ENCODE measurements at regions of chr1 and their contacts with region 1.

Region 1: DNA sequence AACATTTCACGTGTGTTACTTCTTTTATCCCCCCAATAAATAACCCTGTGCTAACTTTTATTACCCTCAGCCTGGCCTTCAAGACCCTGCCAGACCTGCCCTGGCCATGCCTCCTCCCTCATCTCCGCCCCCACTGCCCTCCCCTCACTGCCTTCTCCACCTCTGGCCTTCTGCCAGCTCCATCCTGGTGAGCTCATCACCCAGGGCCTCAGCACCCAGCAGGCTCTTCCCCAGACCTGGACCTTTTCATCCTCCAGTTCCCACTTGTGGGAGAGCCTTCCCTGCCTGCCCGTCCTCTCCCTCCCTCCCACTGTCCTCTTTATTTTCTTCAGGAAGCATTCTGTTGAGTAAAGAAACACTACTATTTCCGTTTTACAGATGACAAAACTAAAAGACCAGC is 72.0 kb downstream of the SLC66A1 start:
- DNase-seq: no peak
- H3K4me3 Mint-ChIP-seq: no peak overlapping the region
- H3K27ac Mint-ChIP-seq: peak overlapping the region; percentile 18
- H3K4me1 Mint-ChIP-seq: peaks cover 30% of the 10 kb centered on the region
- H3K27me3 Mint-ChIP-seq: no peaks in the 10 kb centered on the region

Region 2: DNA sequence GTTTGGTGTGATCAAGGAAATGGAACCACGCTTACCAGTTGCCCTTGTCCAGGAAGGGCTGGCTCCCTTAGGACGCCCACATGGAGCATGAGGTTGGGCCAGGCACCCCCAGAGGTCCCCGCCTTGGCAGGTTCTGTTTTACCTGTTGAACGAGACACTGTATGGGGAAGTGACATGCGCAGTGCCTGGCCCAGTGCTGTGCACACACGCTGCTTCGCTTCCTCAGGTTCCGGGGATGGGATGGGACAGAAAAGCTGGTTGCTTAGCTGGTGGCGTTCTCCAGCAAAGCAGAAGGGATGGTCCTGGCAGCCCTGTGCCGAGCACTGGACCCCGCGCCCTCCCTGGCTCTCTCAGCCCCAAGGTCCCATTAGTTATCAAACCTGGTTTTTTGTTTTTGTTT is 51.3 kb before region 1 on chr1:
- CTCF ChIA-PET with region 1: no interaction called
- POLR2A ChIA-PET with region 1: no interaction called
- intact Hi-C with region 1: no loop called
- DNase-seq: no peak
- H3K4me3 Mint-ChIP-seq: no peak overlapping the region
- H3K27ac Mint-ChIP-seq: no peak overlapping the region
- H3K4me1 Mint-ChIP-seq: peaks cover 29% of the 10 kb centered on the region
- H3K27me3 Mint-ChIP-seq: no peaks in the 10 kb centered on the region

Region 3: DNA sequence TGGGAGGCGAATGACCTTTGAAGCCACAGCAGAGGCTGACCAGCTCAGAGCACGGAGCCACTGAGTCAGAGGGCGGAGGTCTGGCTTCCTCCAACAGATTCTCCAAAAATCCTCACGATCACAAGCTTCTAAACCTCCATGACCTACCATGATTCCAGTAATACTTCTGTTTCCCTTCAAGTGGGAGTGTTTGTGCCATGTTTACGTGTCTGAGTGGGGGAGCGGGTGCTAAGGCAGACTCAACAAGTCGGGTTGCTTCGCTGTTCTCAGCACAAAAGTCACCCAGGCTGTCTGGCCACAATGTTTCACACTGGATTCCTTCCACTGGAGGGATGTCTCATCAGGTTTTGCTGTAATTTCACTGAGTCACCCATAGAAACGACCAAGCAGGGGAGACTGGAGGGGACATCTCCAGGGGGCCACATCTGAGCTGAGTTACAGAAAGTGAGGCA is 14.2 kb after region 1 on chr1:
- CTCF ChIA-PET with region 1: no interaction called
- POLR2A ChIA-PET with region 1: no interaction called
- intact Hi-C with region 1: loop called (anchors 1 kb)
- DNase-seq: peak; percentile 63
- H3K4me3 Mint-ChIP-seq: no peak overlapping the region
- H3K27ac Mint-ChIP-seq: peak overlapping the region; percentile 64
- H3K4me1 Mint-ChIP-seq: peaks cover 77% of the 10 kb centered on the region
- H3K27me3 Mint-ChIP-seq: no peaks in the 10 kb centered on the region

Measured in activated CD4-positive, alpha-beta memory T cell treated with anti-CD3 and anti-CD28 coated beads for 36 hours (primary cell).